Left colon (tissue), 2 donors: ENCODE measurements at regions of chr2 and their contacts with region 1.

Region 1: GRCh38 chr2:219736209-219736608 is 108.8 kb downstream of the SLC4A3 start:
- DNase-seq: no peak
- ATAC-seq: peak; percentile 36

Region 2: DNA sequence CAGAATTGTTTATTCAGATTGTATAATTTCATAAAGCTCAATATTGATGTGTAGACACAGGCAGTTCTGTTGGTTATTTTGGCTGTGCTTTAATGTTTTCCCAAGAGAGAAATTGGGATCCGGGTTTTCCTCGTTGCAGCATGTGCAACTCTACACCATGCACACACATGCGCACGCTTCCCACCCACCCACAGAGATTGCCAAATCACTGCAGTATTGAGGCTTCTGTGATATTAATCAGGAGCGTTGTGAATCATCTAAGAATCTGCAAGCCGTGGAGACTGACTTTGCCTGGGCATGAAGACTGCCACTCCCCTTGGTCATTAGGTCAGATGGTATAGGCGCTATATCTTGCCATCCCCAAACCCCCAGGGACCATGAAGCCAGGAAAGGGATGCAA is 462.7 kb after region 1 on chr2:
- intact Hi-C with region 1: no loop called
- DNase-seq: no peak
- ATAC-seq: no peak

Region 3: DNA sequence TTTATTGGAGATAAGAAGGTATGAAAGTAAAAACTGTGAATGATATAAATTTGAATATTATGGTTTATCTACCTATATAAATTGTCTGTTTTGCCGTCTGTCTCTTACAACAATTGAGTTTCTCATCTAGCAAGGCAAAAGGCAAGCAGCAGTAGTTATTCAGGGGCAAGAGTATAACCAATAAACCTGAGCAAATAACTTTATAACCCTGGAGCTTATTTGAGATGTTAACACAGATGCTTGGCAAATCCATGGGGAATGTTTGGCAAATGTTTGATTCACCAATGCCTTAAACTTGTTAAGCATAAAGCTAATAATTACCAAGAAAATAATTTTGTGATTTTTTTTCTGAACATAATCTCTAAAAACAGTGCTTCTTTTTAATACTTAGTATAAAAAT is 1845.8 kb after region 1 on chr2:
- intact Hi-C with region 1: loop called in 1 of 2 experiments (anchors 10 kb)
- DNase-seq: no peak
- ATAC-seq: peak; percentile 89